Activated CD4-positive, alpha-beta T cell treated with anti-CD3 and anti-CD28 coated beads, Interleukin-2, amount 10 ng/mL, durations not matched to agents 24 days and 14 days (primary cell): ENCODE measurements at regions of chr9 and their contacts with region 1.

Region 1: DNA sequence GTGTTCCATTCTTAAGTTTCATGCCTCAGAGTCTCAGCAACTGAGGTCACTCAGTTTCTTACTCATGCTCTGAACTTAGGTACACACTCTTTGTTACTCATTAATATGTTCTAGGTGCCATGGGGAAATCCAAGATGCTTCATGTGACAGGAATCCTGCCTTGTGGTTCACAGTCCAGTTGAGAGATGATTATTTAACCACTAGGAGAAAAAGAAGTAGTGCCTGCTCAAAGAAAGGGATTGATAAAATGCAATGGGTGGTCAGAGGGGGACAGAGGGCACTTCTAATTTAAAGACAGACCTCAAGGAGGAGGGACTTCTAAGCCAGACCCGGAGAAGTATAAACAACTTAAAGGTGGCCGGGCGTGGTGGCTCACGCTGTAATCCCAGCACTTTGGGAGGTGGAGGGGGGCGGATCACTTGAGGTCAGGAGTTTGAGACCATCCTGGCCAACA is 69.0 kb downstream of the UGCG start:
- DNase-seq: no peak
- H3K4me3 Mint-ChIP-seq: no peak overlapping the region
- H3K27ac Mint-ChIP-seq: peak overlapping the region; percentile 8
- H3K4me1 Mint-ChIP-seq: peaks cover 7% of the 10 kb centered on the region
- H3K27me3 Mint-ChIP-seq: peaks cover 11% of the 10 kb centered on the region

Region 2: GRCh38 chr9:112002131-112002846 is 36.7 kb after region 1 on chr9:
- intact Hi-C with region 1: loop called (anchors 2 kb)
- DNase-seq: peak; percentile 69
- H3K4me3 Mint-ChIP-seq: no peak overlapping the region
- H3K27ac Mint-ChIP-seq: no peak overlapping the region
- H3K4me1 Mint-ChIP-seq: peaks cover 23% of the 10 kb centered on the region
- H3K27me3 Mint-ChIP-seq: peaks cover 18% of the 10 kb centered on the region

Region 3: DNA sequence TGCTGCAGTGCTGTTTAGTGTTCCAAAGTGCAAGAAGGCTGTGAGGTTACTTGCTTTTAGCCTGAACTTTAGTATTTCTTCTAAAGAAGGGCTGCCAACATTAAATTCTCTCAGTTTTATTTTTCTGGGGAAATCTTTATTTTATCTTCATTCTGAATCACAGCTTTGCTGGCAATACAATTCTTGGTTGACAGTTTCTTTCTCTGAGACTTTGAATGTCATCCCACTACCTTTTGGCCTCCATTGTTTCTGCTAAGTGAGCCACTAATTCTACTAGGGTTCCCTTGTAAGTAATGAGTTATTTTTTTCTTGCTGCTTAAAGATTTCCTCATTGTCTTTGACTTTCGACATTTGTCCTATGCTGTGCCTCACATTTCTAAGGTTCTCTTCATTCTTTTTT is 241.9 kb after region 1 on chr9:
- intact Hi-C with region 1: no loop called
- DNase-seq: no peak
- H3K4me3 Mint-ChIP-seq: no peak overlapping the region
- H3K27ac Mint-ChIP-seq: no peak overlapping the region
- H3K4me1 Mint-ChIP-seq: no peaks in the 10 kb centered on the region
- H3K27me3 Mint-ChIP-seq: no peaks in the 10 kb centered on the region